Naive thymus-derived CD4-positive, alpha-beta T cell (primary cell): ENCODE measurements at regions of chr1 and their contacts with region 1.

Region 1: GRCh38 chr1:156848461-156849150 is 10.3 kb downstream of the INSRR start:
- DNase-seq: peak; percentile 36 to 66 (median 60)
- ATAC-seq: peak; percentile 83
- H3K4me3 ChIP-seq: peak overlapping the region; percentile 47
- H3K4me3 Mint-ChIP-seq: peak overlapping the region; percentile 57 to 80 (median 65)
- H3K27ac ChIP-seq: no peak overlapping the region
- H3K27ac Mint-ChIP-seq: peak overlapping the region in 6 of 9 donors; percentile 44 to 86 (median 74)
- H3K4me1 ChIP-seq: peaks cover 0 to 19% of the 10 kb centered on the region in 2 donors
- H3K4me1 Mint-ChIP-seq: peaks cover 10 to 43% (median 34%) of the 10 kb centered on the region in 7 donors
- H3K27me3 ChIP-seq: peaks cover 0 to 3% of the 10 kb centered on the region in 2 donors
- H3K27me3 Mint-ChIP-seq: peaks cover 8 to 43% (median 27%) of the 10 kb centered on the region in 5 donors

Region 2: GRCh38 chr1:154863315-154864174 is 1985.1 kb before region 1 on chr1:
- CTCF ChIA-PET with region 1: no interaction called
- POLR2A ChIA-PET with region 1: no interaction called
- intact Hi-C with region 1: no loop called
- DNase-seq: no peak
- ATAC-seq: peak; percentile 48
- H3K4me3 ChIP-seq: no peak overlapping the region
- H3K4me3 Mint-ChIP-seq: no peak overlapping the region
- H3K27ac ChIP-seq: no peak overlapping the region
- H3K27ac Mint-ChIP-seq: no peak overlapping the region
- H3K4me1 ChIP-seq: no peaks in the 10 kb centered on the region
- H3K4me1 Mint-ChIP-seq: peaks cover 0 to 7% (median 4%) of the 10 kb centered on the region in 7 donors
- H3K27me3 ChIP-seq: no peaks in the 10 kb centered on the region
- H3K27me3 Mint-ChIP-seq: peaks cover 6 to 42% (median 13%) of the 10 kb centered on the region in 5 donors

Region 3: GRCh38 chr1:156860113-156860627 is 11.6 kb after region 1 on chr1:
- CTCF ChIA-PET with region 1: interaction called, 24 read pairs
- POLR2A ChIA-PET with region 1: interaction called, 6 read pairs
- intact Hi-C with region 1: loop called in 1 of 2 experiments (anchors 2 kb)
- DNase-seq: peak; percentile 21 to 77 (median 45)
- ATAC-seq: peak; percentile 71
- H3K4me3 ChIP-seq: peak overlapping the region; percentile 68
- H3K4me3 Mint-ChIP-seq: peak overlapping the region; percentile 70 to 92 (median 83)
- H3K27ac ChIP-seq: no peak overlapping the region
- H3K27ac Mint-ChIP-seq: peak overlapping the region in 5 of 9 donors; percentile 13 to 73 (median 59)
- H3K4me1 ChIP-seq: peaks cover 5 to 20% of the 10 kb centered on the region in 2 donors
- H3K4me1 Mint-ChIP-seq: peaks cover 17 to 64% (median 24%) of the 10 kb centered on the region in 7 donors
- H3K27me3 ChIP-seq: peaks cover 12 to 31% of the 10 kb centered on the region in 2 donors
- H3K27me3 Mint-ChIP-seq: peaks cover 43 to 53% (median 51%) of the 10 kb centered on the region in 5 donors

Region 4: DNA sequence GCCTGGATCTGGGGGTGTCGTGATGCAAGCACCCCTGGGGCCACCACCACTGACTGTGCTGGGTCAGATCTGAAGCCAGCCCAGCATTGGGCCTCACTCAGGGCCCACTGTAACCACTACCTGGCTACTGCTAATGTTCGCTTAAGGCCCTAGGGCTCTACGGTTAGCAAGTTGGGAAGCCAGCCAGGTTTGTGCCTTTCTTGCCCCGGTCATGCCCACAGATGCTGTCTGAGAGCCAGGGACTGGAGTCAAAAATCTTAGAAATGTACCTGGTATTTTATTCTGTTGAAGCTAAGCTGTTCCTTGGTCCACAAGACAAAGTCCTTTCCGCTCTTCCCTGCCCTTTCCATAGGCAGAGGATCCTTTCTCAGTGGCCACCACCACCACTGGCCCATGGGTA is 867.1 kb after region 1 on chr1:
- CTCF ChIA-PET with region 1: no interaction called
- POLR2A ChIA-PET with region 1: no interaction called
- intact Hi-C with region 1: no loop called
- DNase-seq: no peak
- ATAC-seq: no peak
- H3K4me3 ChIP-seq: no peak overlapping the region
- H3K4me3 Mint-ChIP-seq: no peak overlapping the region
- H3K27ac ChIP-seq: no peak overlapping the region
- H3K27ac Mint-ChIP-seq: no peak overlapping the region
- H3K4me1 ChIP-seq: no peaks in the 10 kb centered on the region
- H3K4me1 Mint-ChIP-seq: no peaks in the 10 kb centered on the region
- H3K27me3 ChIP-seq: no peaks in the 10 kb centered on the region
- H3K27me3 Mint-ChIP-seq: peaks cover 0 to 7% (median 1%) of the 10 kb centered on the region in 5 donors